Right lobe of liver (tissue), 6 donors: ENCODE measurements at regions of chr11 and their contacts with region 1.

Region 1: DNA sequence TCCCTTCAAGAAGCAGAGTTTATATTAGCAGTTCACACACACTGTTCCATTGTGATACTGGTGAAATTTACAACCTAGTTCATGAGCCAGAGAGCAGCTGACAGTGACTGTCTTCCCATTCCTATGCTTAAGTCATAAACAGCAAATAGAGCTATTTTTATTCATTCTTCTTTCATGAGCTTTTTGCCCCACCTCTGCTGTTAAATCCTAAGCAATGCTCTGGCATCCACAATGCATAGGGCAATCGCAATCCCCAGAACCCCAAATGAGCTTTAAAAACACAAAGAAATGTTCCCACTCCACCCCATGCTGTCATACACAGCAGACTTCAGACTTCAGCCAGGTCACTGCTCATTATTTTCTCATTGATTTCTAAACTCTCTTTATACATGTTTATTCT is 307.5 kb downstream of the ETS1 start:
- DNase-seq: no peak
- ATAC-seq: peak in 1 of 4 donors; percentile 23
- H3K4me3 ChIP-seq: no peak overlapping the region
- H3K27ac ChIP-seq: no peak overlapping the region
- H3K4me1 ChIP-seq: no peaks in the 10 kb centered on the region
- H3K27me3 ChIP-seq: no peaks in the 10 kb centered on the region
- CTCF ChIP-seq: no peak
- POLR2A ChIP-seq: no peak

Region 2: GRCh38 chr11:128180446-128181087 is 99.3 kb before region 1 on chr11:
- intact Hi-C with region 1: loop called in 1 of 2 experiments (anchors 10 kb)
- DNase-seq: no peak
- ATAC-seq: peak in 3 of 4 donors; percentile 25 to 53 (median 52)
- H3K4me3 ChIP-seq: no peak overlapping the region
- H3K27ac ChIP-seq: no peak overlapping the region
- H3K4me1 ChIP-seq: no peaks in the 10 kb centered on the region
- H3K27me3 ChIP-seq: no peaks in the 10 kb centered on the region
- CTCF ChIP-seq: no peak
- POLR2A ChIP-seq: no peak